ENCODE measurements at regions of chr1 and their contacts with region 1.

Region 1: DNA sequence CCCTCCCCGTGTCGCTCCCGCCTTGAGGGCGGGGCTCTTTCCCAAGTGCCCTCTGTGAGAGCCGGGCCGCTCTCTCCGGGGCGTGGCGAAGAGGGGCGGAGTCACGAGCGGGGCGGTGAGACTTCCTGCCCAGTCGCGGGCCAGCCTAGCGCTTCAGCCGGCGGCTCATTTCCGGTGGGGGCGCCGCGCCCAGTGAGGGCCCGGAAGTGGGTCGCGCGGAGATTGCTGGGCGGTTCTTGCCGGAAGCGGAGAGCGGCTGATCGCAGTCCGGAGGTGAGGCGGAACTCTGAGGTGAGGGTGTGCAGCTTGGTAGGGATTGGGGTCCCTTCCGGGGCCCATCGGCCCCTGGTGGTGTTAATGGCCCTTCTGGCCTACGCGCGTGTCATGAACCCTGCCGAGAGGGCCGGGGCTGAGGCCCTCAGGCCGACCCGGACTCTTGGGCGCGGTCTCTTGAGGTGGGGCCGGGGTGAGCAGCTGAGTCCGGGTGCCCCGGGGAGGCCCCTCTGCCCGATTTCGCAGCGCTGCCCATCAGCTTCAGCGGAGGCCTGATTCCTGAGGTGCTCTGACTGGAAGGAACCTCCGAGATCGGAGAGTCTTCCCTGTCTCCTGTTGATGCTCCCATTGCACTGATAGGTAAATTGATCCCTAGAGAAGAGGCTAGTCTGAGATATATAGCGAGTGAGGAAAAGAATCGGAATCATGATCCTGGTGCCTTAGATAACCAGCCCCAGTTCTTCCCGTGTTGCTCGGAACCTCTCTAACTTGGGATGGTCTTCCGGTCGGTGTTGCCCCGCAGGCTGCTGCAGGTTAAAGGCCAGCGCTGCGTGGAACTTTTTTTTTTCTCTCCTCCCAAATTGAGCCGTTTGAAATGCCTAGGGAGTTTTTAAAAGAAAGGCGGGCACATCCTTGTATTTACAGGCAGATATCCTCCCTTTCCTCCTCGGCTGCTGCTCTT is at the start of gene CAP1:
- DNase-seq: peak; percentile 96 to 97
- H3K4me3 ChIP-seq: peak within 1 kb of the TSS; percentile 81
- H3K4me3 Mint-ChIP-seq: peak within 1 kb of the TSS; percentile 83
- H3K27ac Mint-ChIP-seq: peak within 1 kb of the TSS; percentile 96
- H3K4me1 ChIP-seq: peaks cover 5% of the 10 kb centered on the region; the same call in 1 of the 2 replicates
- H3K4me1 Mint-ChIP-seq: peaks cover 24% of the 10 kb centered on the region
- H3K27me3 ChIP-seq: no peaks in the 10 kb centered on the region
- H3K27me3 Mint-ChIP-seq: no peaks in the 10 kb centered on the region
- CTCF ChIP-seq: no peak
- total RNA-seq, gene CAP1: 181 and 219 TPM in 2 replicates

Region 2: DNA sequence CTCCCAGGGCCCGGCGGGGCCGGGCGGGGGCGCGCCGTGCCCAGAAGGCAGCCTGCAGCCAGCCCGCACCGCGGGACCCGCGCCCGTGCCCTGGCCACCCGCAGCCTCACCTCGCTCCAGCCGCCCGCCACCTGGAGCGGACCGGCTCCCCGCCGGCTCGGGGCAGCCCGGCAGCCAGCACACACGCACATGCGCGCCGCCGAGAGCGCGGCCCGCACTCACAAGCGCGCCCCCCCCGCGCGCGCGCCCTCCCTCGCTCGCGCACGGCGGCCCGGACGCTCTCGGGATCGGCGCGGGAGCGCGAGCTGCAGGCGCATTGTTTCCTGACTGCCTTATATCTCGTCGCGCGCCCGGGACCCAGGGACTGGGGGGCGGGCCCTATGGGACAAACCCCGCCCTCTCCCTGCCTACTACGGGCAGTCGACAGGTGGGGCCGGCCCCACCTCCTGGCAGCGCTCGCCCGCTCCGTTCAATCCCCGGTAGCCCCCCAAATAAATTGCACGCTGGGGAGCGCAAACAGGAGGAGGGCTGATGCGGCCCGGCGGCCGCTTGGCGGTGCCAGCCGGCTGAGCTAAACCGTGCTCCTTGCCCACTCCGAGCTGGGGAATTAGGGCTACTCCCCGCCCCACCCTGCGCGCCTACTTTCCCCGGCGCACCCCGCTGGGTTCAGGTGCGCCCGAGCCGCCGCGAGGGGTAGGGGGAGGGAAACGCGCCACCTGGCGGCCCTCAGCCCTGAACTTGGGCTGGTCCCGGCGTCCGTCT is 138.9 kb before region 1 on chr1 and contains the start of gene MYCL:
- CTCF ChIA-PET with region 1: interaction called, 5 read pairs
- POLR2A ChIA-PET with region 1: interaction called, 13 read pairs
- intact Hi-C with region 1: no loop called
- DNase-seq: peak; percentile 91 to 92
- H3K4me3 ChIP-seq: peak within 1 kb of the TSS; percentile 68
- H3K4me3 Mint-ChIP-seq: peak within 1 kb of the TSS; percentile 76
- H3K27ac Mint-ChIP-seq: no peak within 1 kb of the TSS
- H3K4me1 ChIP-seq: peaks cover 12% of the 10 kb centered on the region
- H3K4me1 Mint-ChIP-seq: no peaks in the 10 kb centered on the region
- H3K27me3 ChIP-seq: no peaks in the 10 kb centered on the region
- H3K27me3 Mint-ChIP-seq: no peaks in the 10 kb centered on the region
- CTCF ChIP-seq: peak; percentile 47 to 82
- total RNA-seq, gene MYCL: 7.2 and 7.8 TPM in 2 replicates

Region 3: DNA sequence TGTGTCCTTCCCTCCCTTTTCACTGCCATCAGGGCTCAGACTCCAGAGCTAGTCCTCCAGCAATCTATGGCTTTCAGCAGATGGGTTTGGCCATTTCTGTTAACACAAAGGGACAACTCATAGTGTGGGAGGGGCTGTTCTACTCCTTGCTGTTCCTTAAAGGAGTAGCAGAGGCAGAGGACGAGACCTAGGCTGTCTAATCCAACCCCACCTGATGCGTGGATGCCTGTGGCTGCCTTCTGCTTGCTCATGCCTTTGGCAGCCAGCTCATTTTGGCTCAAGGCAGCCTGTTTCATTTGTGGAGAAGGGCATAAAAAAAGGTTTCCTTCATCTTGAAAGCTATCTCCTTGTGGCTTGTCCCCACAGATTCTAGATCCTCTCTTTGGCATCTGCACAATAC is 58.8 kb before region 1 on chr1:
- CTCF ChIA-PET with region 1: no interaction called
- POLR2A ChIA-PET with region 1: no interaction called
- intact Hi-C with region 1: loop called (anchors 10 kb)
- DNase-seq: no peak
- H3K4me3 ChIP-seq: no peak overlapping the region
- H3K4me3 Mint-ChIP-seq: no peak overlapping the region
- H3K27ac Mint-ChIP-seq: peak overlapping the region; percentile 70
- H3K4me1 ChIP-seq: peaks cover 3% of the 10 kb centered on the region; the same call in 1 of the 2 replicates
- H3K4me1 Mint-ChIP-seq: peaks cover 9% of the 10 kb centered on the region
- H3K27me3 ChIP-seq: no peaks in the 10 kb centered on the region
- H3K27me3 Mint-ChIP-seq: no peaks in the 10 kb centered on the region
- CTCF ChIP-seq: no peak

Region 4: DNA sequence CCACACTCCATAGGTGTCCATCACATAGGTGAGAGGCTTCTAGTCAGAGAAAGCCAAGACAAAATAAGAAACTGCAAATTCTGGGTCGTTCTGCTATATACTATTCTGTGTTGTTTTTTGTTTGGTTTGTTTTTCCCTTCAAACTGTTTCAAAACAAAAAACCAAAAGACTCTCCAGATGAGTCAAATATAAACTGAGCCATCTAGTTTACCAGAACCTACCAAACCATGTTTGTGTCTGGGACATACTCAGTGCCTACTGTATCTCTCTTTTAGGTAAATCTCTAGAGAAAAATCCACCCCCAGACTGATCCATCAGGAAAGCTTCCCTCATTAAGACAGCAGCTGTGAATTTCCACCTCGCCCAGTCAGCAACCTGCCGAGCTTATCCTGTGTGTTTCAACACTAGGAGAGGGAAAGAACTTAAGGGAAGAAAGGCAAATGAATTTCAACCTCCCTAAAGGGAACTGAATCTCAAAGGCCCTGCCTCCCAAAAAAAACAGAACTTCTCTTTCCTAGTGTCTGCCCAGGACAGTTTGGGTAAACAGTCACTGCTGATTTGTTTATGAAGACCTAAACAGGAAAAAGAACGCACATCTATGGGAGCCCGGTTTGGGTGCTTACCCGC is 39.1 kb after region 1 on chr1:
- CTCF ChIA-PET with region 1: no interaction called
- POLR2A ChIA-PET with region 1: no interaction called
- intact Hi-C with region 1: no loop called
- DNase-seq: no peak
- H3K4me3 ChIP-seq: no peak overlapping the region
- H3K4me3 Mint-ChIP-seq: no peak overlapping the region
- H3K27ac Mint-ChIP-seq: no peak overlapping the region
- H3K4me1 ChIP-seq: no peaks in the 10 kb centered on the region
- H3K4me1 Mint-ChIP-seq: no peaks in the 10 kb centered on the region
- H3K27me3 ChIP-seq: no peaks in the 10 kb centered on the region
- H3K27me3 Mint-ChIP-seq: no peaks in the 10 kb centered on the region
- CTCF ChIP-seq: no peak

Region 5: GRCh38 chr1:40161125-40161887 is 120.5 kb after region 1 on chr1 and contains the start of gene RLF:
- CTCF ChIA-PET with region 1: no interaction called
- POLR2A ChIA-PET with region 1: no interaction called
- intact Hi-C with region 1: no loop called
- DNase-seq: peak; percentile 88 to 90
- H3K4me3 ChIP-seq: peak within 1 kb of the TSS; percentile 74
- H3K4me3 Mint-ChIP-seq: no peak within 1 kb of the TSS
- H3K27ac Mint-ChIP-seq: no peak within 1 kb of the TSS
- H3K4me1 ChIP-seq: peaks cover 5% of the 10 kb centered on the region; the same call in 1 of the 2 replicates
- H3K4me1 Mint-ChIP-seq: peaks cover 13% of the 10 kb centered on the region
- H3K27me3 ChIP-seq: no peaks in the 10 kb centered on the region
- H3K27me3 Mint-ChIP-seq: no peaks in the 10 kb centered on the region
- CTCF ChIP-seq: no peak
- total RNA-seq, gene RLF: 11.6 and 12.8 TPM in 2 replicates

Measured in Caco-2 (cell line).